ENCODE measurements at regions of chr2 and their contacts with region 1.

Region 1: DNA sequence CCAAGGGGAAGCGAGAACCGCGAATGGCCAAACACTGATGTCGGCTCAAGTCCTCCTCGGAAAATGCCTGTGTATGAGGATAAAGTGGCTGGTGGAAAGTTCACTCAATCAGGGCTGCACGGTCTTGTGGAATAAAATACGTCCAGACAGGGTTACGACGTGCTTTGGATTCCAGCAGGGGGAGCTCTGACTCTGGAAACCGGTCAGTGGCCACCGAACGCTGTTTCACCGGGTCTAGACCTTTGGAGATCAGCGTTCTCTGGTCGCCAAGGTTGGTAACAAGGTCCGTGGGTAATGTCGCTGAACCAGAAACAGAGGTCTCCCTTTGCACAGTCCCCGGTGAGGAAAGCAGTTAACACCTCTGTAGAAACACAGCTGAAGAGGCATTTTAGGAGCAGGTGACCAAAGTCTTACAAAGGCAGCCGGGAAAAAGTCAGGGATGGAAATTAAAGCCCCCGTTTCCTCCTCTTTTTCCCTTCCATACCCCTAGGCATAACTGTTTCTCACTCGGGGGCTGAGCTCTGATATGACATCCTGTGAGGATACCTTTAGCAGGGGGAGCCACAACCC is 47.8 kb downstream of the CDCA7 start:
- DNase-seq: peak; percentile 92
- ATAC-seq: peak; percentile 93
- H3K4me3 ChIP-seq: peak overlapping the region; percentile 74
- H3K27ac ChIP-seq: no peak overlapping the region
- H3K4me1 ChIP-seq: peaks cover 16% of the 10 kb centered on the region
- H3K27me3 ChIP-seq: no peaks in the 10 kb centered on the region
- CTCF ChIP-seq: peak; percentile 93

Region 2: GRCh38 chr2:172806493-172806892 is 596.0 kb before region 1 on chr2:
- CTCF ChIA-PET with region 1: no interaction called
- POLR2A ChIA-PET with region 1: no interaction called
- intact Hi-C with region 1: loop called (anchors 5 kb)
- DNase-seq: peak; percentile 70
- ATAC-seq: peak; percentile 64; the same call in 1 of the 2 replicates
- H3K4me3 ChIP-seq: no peak overlapping the region
- H3K27ac ChIP-seq: no peak overlapping the region
- H3K4me1 ChIP-seq: no peaks in the 10 kb centered on the region
- H3K27me3 ChIP-seq: no peaks in the 10 kb centered on the region
- CTCF ChIP-seq: peak; percentile 93

Region 3: GRCh38 chr2:173210270-173211196 is 192.0 kb before region 1 on chr2:
- CTCF ChIA-PET with region 1: interaction called, 3 read pairs
- POLR2A ChIA-PET with region 1: no interaction called
- intact Hi-C with region 1: loop called (anchors 1 kb)
- DNase-seq: peak; percentile 93
- ATAC-seq: peak; percentile 96
- H3K4me3 ChIP-seq: no peak overlapping the region
- H3K27ac ChIP-seq: peak overlapping the region; percentile 54
- H3K4me1 ChIP-seq: peaks cover 4% of the 10 kb centered on the region
- H3K27me3 ChIP-seq: no peaks in the 10 kb centered on the region
- CTCF ChIP-seq: peak; percentile 95

Region 4: GRCh38 chr2:173278794-173279526 is 123.5 kb before region 1 on chr2:
- CTCF ChIA-PET with region 1: no interaction called
- POLR2A ChIA-PET with region 1: no interaction called
- intact Hi-C with region 1: no loop called
- DNase-seq: no peak
- ATAC-seq: no peak
- H3K4me3 ChIP-seq: no peak overlapping the region
- H3K27ac ChIP-seq: no peak overlapping the region
- H3K4me1 ChIP-seq: no peaks in the 10 kb centered on the region
- H3K27me3 ChIP-seq: no peaks in the 10 kb centered on the region
- CTCF ChIP-seq: no peak

Region 5: GRCh38 chr2:173298536-173299097 is 103.9 kb before region 1 on chr2:
- CTCF ChIA-PET with region 1: no interaction called
- POLR2A ChIA-PET with region 1: no interaction called
- intact Hi-C with region 1: no loop called
- DNase-seq: no peak
- ATAC-seq: no peak
- H3K4me3 ChIP-seq: no peak overlapping the region
- H3K27ac ChIP-seq: no peak overlapping the region
- H3K4me1 ChIP-seq: no peaks in the 10 kb centered on the region
- H3K27me3 ChIP-seq: no peaks in the 10 kb centered on the region
- CTCF ChIP-seq: no peak

Region 6: DNA sequence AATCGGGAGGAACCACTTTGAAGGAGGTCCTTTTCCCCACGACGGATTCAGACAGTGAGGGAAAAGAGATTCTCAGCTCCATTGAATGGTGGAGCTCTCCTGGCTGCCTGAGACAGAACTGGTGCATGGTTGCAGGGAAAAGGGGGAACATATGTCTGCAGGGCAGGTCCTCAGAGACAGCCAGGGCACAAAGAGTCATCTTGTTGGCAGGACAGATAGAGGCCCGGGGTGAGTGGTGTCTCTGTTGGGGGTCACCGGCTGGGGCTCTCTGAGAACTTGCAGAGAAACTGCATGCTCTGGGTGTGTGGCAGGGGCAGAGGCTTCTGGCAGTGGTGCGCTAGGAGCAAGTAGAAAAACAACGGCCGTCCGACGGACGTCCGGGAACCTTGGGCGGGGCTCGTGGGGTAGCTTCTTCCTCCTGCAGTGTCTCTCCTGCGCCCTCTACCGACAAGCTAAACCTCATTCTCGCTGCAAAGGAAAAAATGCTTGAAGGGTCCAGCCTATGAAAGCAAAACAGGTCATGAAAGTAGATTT is 46.5 kb after region 1 on chr2:
- CTCF ChIA-PET with region 1: interaction called, 28 read pairs
- POLR2A ChIA-PET with region 1: no interaction called
- intact Hi-C with region 1: loop called (anchors 1 kb)
- DNase-seq: peak; percentile 95
- ATAC-seq: peak; percentile 96
- H3K4me3 ChIP-seq: peak overlapping the region; percentile 60
- H3K27ac ChIP-seq: peak overlapping the region; percentile 35; the same call in 1 of the 2 replicates
- H3K4me1 ChIP-seq: peaks cover 11% of the 10 kb centered on the region; the same call in 1 of the 2 replicates
- H3K27me3 ChIP-seq: no peaks in the 10 kb centered on the region
- CTCF ChIP-seq: peak; percentile 86

Region 7: DNA sequence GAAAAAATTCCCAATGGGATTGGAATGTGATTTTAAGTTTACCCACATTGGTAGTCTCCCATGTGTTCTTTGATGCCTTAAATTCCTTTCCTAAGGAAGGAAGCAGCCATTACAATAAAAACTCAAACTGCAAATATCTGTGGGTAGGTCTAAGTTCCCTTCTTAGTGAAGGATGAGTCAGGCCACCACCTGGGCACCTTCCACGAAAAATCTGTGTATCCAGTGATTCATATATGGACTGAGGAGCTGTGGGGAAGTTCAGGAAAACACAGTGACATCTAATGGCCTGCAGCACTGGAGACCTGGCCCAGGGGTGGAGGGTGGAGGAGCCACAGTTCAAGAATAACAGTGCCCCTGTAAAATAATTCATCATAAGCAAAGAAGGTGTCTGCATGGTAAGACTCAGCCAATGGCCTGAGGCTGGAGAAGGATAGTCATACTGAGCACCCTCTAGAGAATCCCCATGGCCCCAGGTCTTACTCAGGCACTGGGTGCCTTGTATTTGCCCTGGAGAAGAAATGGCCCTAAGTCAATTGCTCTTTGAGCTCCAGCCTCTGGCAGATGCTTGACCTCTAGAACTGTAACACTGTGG is 314.1 kb after region 1 on chr2:
- CTCF ChIA-PET with region 1: no interaction called
- POLR2A ChIA-PET with region 1: no interaction called
- intact Hi-C with region 1: loop called (anchors 1 kb)
- DNase-seq: peak; percentile 97
- ATAC-seq: peak; percentile 81
- H3K4me3 ChIP-seq: 0 out of 2 replicates have a peak overlapping the region, but pooled peaks have one; percentile 8
- H3K27ac ChIP-seq: peak overlapping the region; percentile 96
- H3K4me1 ChIP-seq: peaks cover 43% of the 10 kb centered on the region
- H3K27me3 ChIP-seq: no peaks in the 10 kb centered on the region
- CTCF ChIP-seq: peak; percentile 42

Region 8: GRCh38 chr2:174341286-174341994 is 939.0 kb after region 1 on chr2:
- CTCF ChIA-PET with region 1: no interaction called
- POLR2A ChIA-PET with region 1: no interaction called
- intact Hi-C with region 1: loop called (anchors 2 kb)
- DNase-seq: peak; percentile 93
- ATAC-seq: peak; percentile 68
- H3K4me3 ChIP-seq: peak overlapping the region; percentile 62
- H3K27ac ChIP-seq: peak overlapping the region; percentile 21
- H3K4me1 ChIP-seq: peaks cover 23% of the 10 kb centered on the region
- H3K27me3 ChIP-seq: no peaks in the 10 kb centered on the region
- CTCF ChIP-seq: peak; percentile 98